Gastrocnemius medialis (tissue), 4 donors: ENCODE measurements at regions of chr2 and their contacts with region 1.

Region 1: GRCh38 chr2:197705121-197705911 is at the start of gene MARS2:
- DNase-seq: peak; percentile 85 to 92
- ATAC-seq: peak; percentile 95 to 96
- H3K4me3 ChIP-seq: peak within 1 kb of the TSS; percentile 78 to 97 (median 85)
- H3K27ac ChIP-seq: peak within 1 kb of the TSS; percentile 80 to 84 (median 82)
- H3K4me1 ChIP-seq: peaks cover 34 to 43% of the 10 kb centered on the region in 2 donors
- H3K27me3 ChIP-seq: no peaks in the 10 kb centered on the region
- CTCF ChIP-seq: peak in 1 of 5 experiments; percentile 3
- POLR2A ChIP-seq: peak; percentile 56 to 74
- total RNA-seq, gene MARS2: 3.4 to 8.9 (median 7.7) TPM

Region 2: GRCh38 chr2:197434541-197435513 is 270.5 kb before region 1 on chr2 and contains the start of gene SF3B1:
- in situ Hi-C with region 1: no loop called
- intact Hi-C with region 1: loop called (anchors 5 kb)
- DNase-seq: peak; percentile 96 to 97
- ATAC-seq: peak; percentile 92 to 96
- H3K4me3 ChIP-seq: peak within 1 kb of the TSS; percentile 92 to 99 (median 98)
- H3K27ac ChIP-seq: peak within 1 kb of the TSS; percentile 99 to 100 (median 99)
- H3K4me1 ChIP-seq: peaks cover 36 to 47% of the 10 kb centered on the region in 2 donors
- H3K27me3 ChIP-seq: no peaks in the 10 kb centered on the region
- CTCF ChIP-seq: no peak
- POLR2A ChIP-seq: peak; percentile 87 to 93
- total RNA-seq, gene SF3B1: 137 to 297 (median 158) TPM

Region 3: GRCh38 chr2:197499594-197500526 is 205.5 kb before region 1 on chr2 and contains the starts of genes HSPD1 and HSPE1:
- in situ Hi-C with region 1: no loop called
- intact Hi-C with region 1: loop called (anchors 1 kb)
- DNase-seq: peak; percentile 96
- ATAC-seq: peak; percentile 86 to 91
- H3K4me3 ChIP-seq: peak within 1 kb of the TSS; percentile 81 to 89 (median 84)
- H3K27ac ChIP-seq: peak within 1 kb of the TSS; percentile 96 to 98 (median 97)
- H3K4me1 ChIP-seq: peaks cover 38 to 45% of the 10 kb centered on the region in 2 donors
- H3K27me3 ChIP-seq: no peaks in the 10 kb centered on the region
- CTCF ChIP-seq: peak in 3 of 5 experiments; percentile 25 to 44 (median 26)
- POLR2A ChIP-seq: peak; percentile 95
- total RNA-seq, gene HSPD1: 82.0 to 104 (median 88.2) TPM
- total RNA-seq, gene HSPE1: 43.2 to 122 (median 88.0) TPM

Region 4: DNA sequence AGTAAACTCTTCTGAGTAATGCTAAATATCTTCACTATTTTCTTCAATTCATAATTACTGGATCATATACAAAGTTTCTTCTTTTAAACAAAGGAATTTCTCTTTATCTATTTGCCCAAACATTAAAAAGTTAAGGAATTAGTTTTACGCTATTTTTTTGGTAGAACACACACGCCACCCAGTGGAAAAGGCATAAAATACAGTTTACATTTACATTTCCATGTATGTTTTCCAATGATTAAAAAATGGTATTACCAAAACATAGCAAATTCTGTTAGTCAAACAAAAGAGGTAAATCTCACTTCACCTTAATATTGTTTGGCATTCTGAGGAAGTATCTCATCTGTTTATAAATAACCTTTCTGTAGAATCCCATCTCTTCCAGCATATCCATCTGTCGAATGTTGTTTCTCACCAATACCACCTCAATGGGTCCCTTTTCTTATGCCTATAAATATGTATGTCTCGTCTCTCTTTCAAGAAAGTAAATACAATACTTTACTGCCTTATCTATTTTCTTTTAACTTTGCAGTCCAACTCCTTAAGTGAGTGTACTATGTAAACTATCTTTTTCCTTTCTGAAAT is 72.6 kb after region 1 on chr2:
- in situ Hi-C with region 1: loop called (anchors 5 to 10 kb)
- intact Hi-C with region 1: no loop called
- DNase-seq: no peak
- ATAC-seq: no peak
- H3K4me3 ChIP-seq: no peak overlapping the region
- H3K27ac ChIP-seq: peak overlapping the region in 1 of 4 donors; percentile 62
- H3K4me1 ChIP-seq: peaks cover 31 to 42% of the 10 kb centered on the region in 2 donors
- H3K27me3 ChIP-seq: no peaks in the 10 kb centered on the region
- CTCF ChIP-seq: peak; percentile 50 to 87 (median 76)
- POLR2A ChIP-seq: no peak

Region 5: DNA sequence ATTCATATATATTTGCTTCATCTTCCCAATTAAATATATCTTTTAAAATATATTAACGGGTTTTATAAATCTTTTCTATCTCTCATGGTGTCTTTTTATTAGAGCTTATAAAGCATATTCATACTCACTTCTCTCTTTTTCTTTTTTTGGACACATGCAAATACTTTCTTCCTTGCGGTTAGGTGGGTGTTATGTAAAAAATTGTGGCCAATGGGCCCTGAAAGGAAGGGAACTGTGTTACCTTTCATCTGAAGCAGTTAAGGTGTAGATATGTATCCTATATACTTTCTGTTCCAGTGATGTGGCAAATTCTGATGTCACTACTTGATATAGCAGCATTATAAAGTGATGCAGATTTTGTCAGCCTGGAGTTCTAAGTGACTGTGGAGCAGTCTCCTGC is 813.6 kb after region 1 on chr2:
- in situ Hi-C with region 1: no loop called
- intact Hi-C with region 1: no loop called
- DNase-seq: no peak
- ATAC-seq: no peak
- H3K4me3 ChIP-seq: no peak overlapping the region
- H3K27ac ChIP-seq: no peak overlapping the region
- H3K4me1 ChIP-seq: no peaks in the 10 kb centered on the region
- H3K27me3 ChIP-seq: no peaks in the 10 kb centered on the region
- CTCF ChIP-seq: no peak
- POLR2A ChIP-seq: no peak

Region 6: DNA sequence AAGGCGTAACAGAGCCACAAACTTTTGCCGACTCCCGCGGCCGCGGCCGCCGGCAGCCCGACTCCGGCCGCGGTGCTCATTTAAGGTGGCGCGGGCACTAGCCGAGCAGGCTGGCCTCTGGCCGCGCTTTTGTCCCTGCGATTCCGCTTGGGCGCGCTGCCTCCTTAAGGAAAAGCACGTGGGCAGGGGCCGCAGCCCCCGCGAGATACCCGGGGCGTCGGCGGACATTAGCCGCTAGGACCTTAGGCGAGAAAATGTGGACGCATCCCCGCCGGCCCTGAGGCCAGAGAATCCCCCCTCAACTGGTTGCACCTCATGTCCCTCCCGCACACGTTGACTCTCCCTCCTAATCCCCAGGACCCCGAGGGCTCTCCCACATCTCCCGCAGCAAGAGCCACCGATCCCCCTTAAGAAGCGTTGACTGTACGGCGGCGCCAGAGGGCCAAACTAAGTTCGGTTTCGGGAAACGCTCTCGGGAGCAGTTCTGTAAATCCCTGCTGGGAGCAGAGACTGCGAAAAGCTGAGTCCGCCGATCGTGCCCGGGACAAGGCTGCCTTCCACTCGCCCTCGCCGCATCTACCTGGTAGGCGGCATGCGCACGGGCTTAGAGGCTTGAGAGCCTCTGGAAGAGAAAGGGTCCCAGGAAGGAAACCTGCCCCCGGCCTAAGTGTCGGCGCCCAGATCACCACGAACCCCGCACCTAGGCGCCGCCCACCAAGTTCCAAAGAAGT is 1754.1 kb after region 1 on chr2:
- in situ Hi-C with region 1: no loop called
- intact Hi-C with region 1: loop called (anchors 10 kb)
- DNase-seq: peak; percentile 70 to 86
- ATAC-seq: peak; percentile 79 to 80
- H3K4me3 ChIP-seq: peak overlapping the region; percentile 85 to 96 (median 90)
- H3K27ac ChIP-seq: peak overlapping the region; percentile 77 to 86 (median 84)
- H3K4me1 ChIP-seq: peaks cover 24 to 54% of the 10 kb centered on the region in 2 donors
- H3K27me3 ChIP-seq: peaks cover 73 to 77% (median 74%) of the 10 kb centered on the region in 3 donors
- CTCF ChIP-seq: peak in 2 of 5 experiments; percentile 25 to 47
- POLR2A ChIP-seq: peak in 1 of 2 donors; percentile 54